Activated CD4-positive, alpha-beta memory T cell treated with anti-CD3 and anti-CD28 coated beads, Interleukin-2, amount 10 ng/mL, durations not matched to agents 7 days and 5 days (primary cell): ENCODE measurements at regions of chr3 and their contacts with region 1.

Region 1: GRCh38 chr3:100463002-100463401 is 29.4 kb upstream of the TMEM45A start:
- DNase-seq: no peak
- H3K4me3 Mint-ChIP-seq: no peak overlapping the region
- H3K27ac Mint-ChIP-seq: no peak overlapping the region
- H3K4me1 Mint-ChIP-seq: peaks cover 16% of the 10 kb centered on the region
- H3K27me3 Mint-ChIP-seq: no peaks in the 10 kb centered on the region

Region 2: GRCh38 chr3:100590114-100590839 is 127.3 kb after region 1 on chr3:
- CTCF ChIA-PET with region 1: interaction called, 70 read pairs
- POLR2A ChIA-PET with region 1: no interaction called
- DNase-seq: peak; percentile 64
- H3K4me3 Mint-ChIP-seq: no peak overlapping the region
- H3K27ac Mint-ChIP-seq: no peak overlapping the region
- H3K4me1 Mint-ChIP-seq: peaks cover 3% of the 10 kb centered on the region
- H3K27me3 Mint-ChIP-seq: peaks cover 6% of the 10 kb centered on the region

Region 3: GRCh38 chr3:100737334-100737733 is 274.3 kb after region 1 on chr3:
- CTCF ChIA-PET with region 1: no interaction called
- POLR2A ChIA-PET with region 1: no interaction called
- DNase-seq: no peak
- H3K4me3 Mint-ChIP-seq: no peak overlapping the region
- H3K27ac Mint-ChIP-seq: no peak overlapping the region
- H3K4me1 Mint-ChIP-seq: peaks cover 3% of the 10 kb centered on the region
- H3K27me3 Mint-ChIP-seq: no peaks in the 10 kb centered on the region

Region 4: GRCh38 chr3:100796556-100796955 is 333.6 kb after region 1 on chr3:
- CTCF ChIA-PET with region 1: interaction called, 18 read pairs
- POLR2A ChIA-PET with region 1: no interaction called
- DNase-seq: no peak
- H3K4me3 Mint-ChIP-seq: no peak overlapping the region
- H3K27ac Mint-ChIP-seq: no peak overlapping the region
- H3K4me1 Mint-ChIP-seq: peaks cover 3% of the 10 kb centered on the region
- H3K27me3 Mint-ChIP-seq: peaks cover 3% of the 10 kb centered on the region